ENCODE measurements at regions of chr1 and their contacts with region 1.

Region 1: DNA sequence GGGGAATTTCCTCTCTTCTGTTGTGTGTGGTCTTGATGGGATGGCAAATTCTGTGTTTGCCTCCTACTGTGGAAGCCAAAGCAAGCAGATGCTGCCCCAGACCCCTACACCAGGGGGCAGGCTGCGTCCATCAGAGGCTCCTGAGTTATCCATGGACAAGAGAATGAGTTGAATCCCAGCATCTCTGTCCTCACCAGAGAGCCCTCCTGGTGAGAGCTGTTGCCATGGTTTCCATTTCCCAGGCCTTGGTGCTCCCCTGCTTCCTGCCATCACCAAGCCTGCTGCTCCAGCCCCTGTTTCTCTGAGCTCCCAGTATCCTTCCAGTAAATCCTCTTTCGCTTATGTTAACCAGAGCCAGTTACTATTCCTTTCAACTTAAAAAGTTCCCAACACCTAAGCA is 20.4 kb upstream of the GNG12 start:
- DNase-seq: no peak
- H3K4me3 Mint-ChIP-seq: no peak overlapping the region
- H3K27ac Mint-ChIP-seq: no peak overlapping the region
- H3K4me1 Mint-ChIP-seq: no peaks in the 10 kb centered on the region
- H3K27me3 Mint-ChIP-seq: peaks cover 10% of the 10 kb centered on the region

Region 2: DNA sequence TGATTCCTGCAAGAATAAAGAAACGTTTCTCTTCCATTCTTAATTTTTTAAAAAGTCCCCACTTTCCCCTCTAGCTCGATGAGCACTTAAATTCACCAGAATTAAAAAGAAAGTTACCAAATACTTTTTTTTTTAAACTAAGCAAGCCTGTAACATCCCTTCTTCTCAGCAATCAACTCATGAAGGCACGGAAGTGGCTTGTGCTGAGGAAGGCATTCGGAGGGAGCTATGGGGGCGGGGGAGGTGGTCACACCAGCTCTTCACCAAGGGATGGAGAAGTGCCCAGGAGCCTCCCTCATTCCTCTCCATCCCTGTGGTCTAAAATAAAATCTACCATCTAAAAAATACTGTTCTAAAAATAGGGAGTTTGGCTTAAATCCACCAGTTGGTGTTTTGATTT is 107.4 kb before region 1 on chr1:
- intact Hi-C with region 1: no loop called
- DNase-seq: no peak
- H3K4me3 Mint-ChIP-seq: no peak overlapping the region
- H3K27ac Mint-ChIP-seq: no peak overlapping the region
- H3K4me1 Mint-ChIP-seq: peaks cover 28% of the 10 kb centered on the region
- H3K27me3 Mint-ChIP-seq: peaks cover 13% of the 10 kb centered on the region

Region 3: GRCh38 chr1:68010090-68010489 is 156.4 kb after region 1 on chr1:
- intact Hi-C with region 1: loop called (anchors 5 kb)
- DNase-seq: no peak
- H3K4me3 Mint-ChIP-seq: no peak overlapping the region
- H3K27ac Mint-ChIP-seq: no peak overlapping the region
- H3K4me1 Mint-ChIP-seq: no peaks in the 10 kb centered on the region
- H3K27me3 Mint-ChIP-seq: no peaks in the 10 kb centered on the region

Measured in activated T-helper 2 cell treated with anti-CD3 and anti-CD28 coated beads, Interferon-gamma antibody, Interleukin-2, Interleukin-4, amounts not matched to agents 10 μg/mL and 5 μg/mL and 100 μg/mL, durations not matched to agents 14 hours and 24 hours and 36 hours (primary cell).